Activated CD8-positive, alpha-beta T cell treated with anti-CD3 and anti-CD28 coated beads, Interleukin-2, amount 10 ng/mL, durations not matched to agents 7 days and 5 days (primary cell): ENCODE measurements at regions of chr5 and their contacts with region 1.

Region 1: GRCh38 chr5:138542956-138543729 is at the start of gene ETF1:
- DNase-seq: peak; percentile 100
- ATAC-seq: peak; percentile 90
- H3K4me3 Mint-ChIP-seq: peak within 1 kb of the TSS; percentile 94
- H3K27ac Mint-ChIP-seq: peak within 1 kb of the TSS; percentile 100
- H3K4me1 Mint-ChIP-seq: peaks cover 62% of the 10 kb centered on the region
- H3K27me3 Mint-ChIP-seq: no peaks in the 10 kb centered on the region
- total RNA-seq, gene ETF1: 92.7 to 93.3 TPM

Region 2: GRCh38 chr5:138482638-138483037 is 60.5 kb before region 1 on chr5:
- CTCF ChIA-PET with region 1: no interaction called
- POLR2A ChIA-PET with region 1: no interaction called
- DNase-seq: no peak
- ATAC-seq: no peak
- H3K4me3 Mint-ChIP-seq: no peak overlapping the region
- H3K27ac Mint-ChIP-seq: no peak overlapping the region
- H3K4me1 Mint-ChIP-seq: no peaks in the 10 kb centered on the region
- H3K27me3 Mint-ChIP-seq: peaks cover 14% of the 10 kb centered on the region

Region 3: DNA sequence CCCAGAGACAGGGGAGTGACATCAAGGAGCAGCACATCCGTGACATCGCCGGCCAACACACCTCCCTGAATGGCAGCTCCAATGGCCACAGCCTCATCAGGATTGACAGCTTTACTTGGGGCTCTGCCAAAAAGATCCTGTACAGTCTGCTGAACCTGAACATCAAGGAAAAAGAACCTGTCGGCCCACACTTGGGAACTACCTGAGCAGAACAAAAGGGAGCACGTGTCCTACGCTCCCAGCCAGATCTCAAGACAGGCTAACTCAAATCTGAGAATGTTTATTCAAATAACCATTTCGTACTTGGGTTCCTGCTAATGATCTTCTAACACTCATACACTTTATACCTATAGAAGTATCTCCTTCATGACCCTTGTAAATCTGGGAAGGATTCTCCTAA is 16.8 kb after region 1 on chr5:
- CTCF ChIA-PET with region 1: interaction called, 12 read pairs
- POLR2A ChIA-PET with region 1: interaction called, 14 read pairs
- DNase-seq: no peak
- ATAC-seq: no peak
- H3K4me3 Mint-ChIP-seq: no peak overlapping the region
- H3K27ac Mint-ChIP-seq: no peak overlapping the region
- H3K4me1 Mint-ChIP-seq: peaks cover 18% of the 10 kb centered on the region
- H3K27me3 Mint-ChIP-seq: no peaks in the 10 kb centered on the region

Region 4: DNA sequence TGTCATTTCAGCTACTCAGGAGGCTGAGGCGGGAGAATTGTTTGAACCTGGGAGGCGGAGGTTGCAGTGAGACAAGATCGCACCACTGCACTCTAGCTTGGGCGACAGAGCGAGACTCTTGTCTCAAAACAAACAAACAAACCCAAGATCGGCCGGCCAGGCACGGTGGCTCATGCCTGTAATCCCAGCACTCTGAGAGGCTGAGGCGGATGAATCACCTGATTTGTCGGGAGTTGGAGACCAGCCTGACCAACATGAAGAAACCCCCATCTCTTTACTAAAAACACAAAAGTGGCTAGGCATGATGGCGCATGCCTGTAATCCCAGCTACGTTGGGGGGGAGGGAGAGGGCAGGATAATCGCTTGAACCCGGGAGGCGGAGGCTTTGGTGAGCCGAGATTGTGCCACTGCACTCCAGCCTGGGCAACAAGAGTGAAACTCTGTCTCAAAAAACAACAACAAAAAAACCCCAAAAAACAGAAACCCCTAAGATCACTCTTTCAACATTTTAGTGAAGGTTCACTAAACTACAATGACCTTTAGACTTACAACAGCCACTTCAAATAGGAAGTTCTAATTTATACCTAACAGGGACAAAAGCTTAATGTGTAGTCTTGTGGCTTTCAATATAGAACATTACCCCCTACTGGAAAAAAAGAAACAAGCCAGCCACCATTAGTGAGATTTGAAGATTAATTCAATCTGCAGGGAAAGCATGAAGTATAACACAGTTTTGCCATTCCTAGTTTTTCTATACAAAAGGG is 25.1 kb after region 1 on chr5:
- CTCF ChIA-PET with region 1: interaction called, 23 read pairs
- POLR2A ChIA-PET with region 1: interaction called, 51 read pairs
- DNase-seq: no peak
- ATAC-seq: no peak
- H3K4me3 Mint-ChIP-seq: no peak overlapping the region
- H3K27ac Mint-ChIP-seq: peak overlapping the region; percentile 36
- H3K4me1 Mint-ChIP-seq: peaks cover 66% of the 10 kb centered on the region
- H3K27me3 Mint-ChIP-seq: no peaks in the 10 kb centered on the region

Region 5: DNA sequence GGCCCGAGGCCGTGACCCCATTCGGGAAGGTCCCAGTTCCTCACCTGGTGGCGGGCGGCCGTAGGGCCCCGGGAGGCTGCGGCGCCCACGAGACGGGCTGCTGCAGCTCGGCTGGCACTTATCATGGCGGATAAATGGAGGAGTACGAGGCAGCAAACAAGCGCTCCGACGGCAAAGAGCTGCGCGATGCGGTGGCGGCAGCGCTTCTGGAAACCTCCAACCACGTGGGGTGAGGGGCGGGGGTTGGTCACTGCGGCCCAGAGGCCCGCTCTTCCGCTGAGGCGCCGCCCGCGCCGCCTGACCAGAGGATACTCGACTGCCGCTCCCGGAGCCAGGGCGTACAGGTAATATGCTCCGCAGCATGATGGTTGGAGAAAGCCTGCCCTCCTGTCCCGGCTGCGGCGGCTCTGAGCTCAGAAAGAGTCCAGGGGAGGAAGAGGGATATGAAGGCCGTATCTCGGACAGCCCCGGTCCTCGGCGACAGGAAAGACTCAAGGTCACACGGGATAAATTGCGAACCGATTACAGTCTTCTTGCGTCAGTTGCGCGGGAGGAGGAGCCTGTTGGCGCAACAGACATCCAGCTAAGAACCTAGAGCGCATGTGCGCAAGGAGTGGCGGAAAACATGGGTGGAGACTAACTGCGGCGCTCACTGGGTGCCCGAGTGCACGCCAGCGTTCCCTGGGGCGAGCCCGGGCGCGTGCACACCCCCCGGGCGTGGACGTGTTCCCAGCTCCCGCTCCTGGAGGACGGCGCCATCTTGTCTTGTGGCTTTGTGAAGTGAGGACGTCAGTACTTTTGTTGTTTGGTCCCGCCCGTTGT is 32.3 kb after region 1 on chr5 and contains the start of gene HSPA9:
- CTCF ChIA-PET with region 1: interaction called, 8 read pairs
- POLR2A ChIA-PET with region 1: interaction called, 51 read pairs
- DNase-seq: peak; percentile 98
- ATAC-seq: peak; percentile 87
- H3K4me3 Mint-ChIP-seq: peak within 1 kb of the TSS; percentile 92
- H3K27ac Mint-ChIP-seq: peak within 1 kb of the TSS; percentile 100
- H3K4me1 Mint-ChIP-seq: peaks cover 35% of the 10 kb centered on the region
- H3K27me3 Mint-ChIP-seq: no peaks in the 10 kb centered on the region
- total RNA-seq, gene HSPA9: 214 to 216 TPM

Region 6: GRCh38 chr5:138610918-138611677 is 68.0 kb after region 1 on chr5:
- CTCF ChIA-PET with region 1: no interaction called
- POLR2A ChIA-PET with region 1: no interaction called
- DNase-seq: no peak
- ATAC-seq: no peak
- H3K4me3 Mint-ChIP-seq: no peak overlapping the region
- H3K27ac Mint-ChIP-seq: no peak overlapping the region
- H3K4me1 Mint-ChIP-seq: peaks cover 10% of the 10 kb centered on the region
- H3K27me3 Mint-ChIP-seq: peaks cover 46% of the 10 kb centered on the region